ENCODE measurements at regions of chr16 and their contacts with region 1.

Region 1: DNA sequence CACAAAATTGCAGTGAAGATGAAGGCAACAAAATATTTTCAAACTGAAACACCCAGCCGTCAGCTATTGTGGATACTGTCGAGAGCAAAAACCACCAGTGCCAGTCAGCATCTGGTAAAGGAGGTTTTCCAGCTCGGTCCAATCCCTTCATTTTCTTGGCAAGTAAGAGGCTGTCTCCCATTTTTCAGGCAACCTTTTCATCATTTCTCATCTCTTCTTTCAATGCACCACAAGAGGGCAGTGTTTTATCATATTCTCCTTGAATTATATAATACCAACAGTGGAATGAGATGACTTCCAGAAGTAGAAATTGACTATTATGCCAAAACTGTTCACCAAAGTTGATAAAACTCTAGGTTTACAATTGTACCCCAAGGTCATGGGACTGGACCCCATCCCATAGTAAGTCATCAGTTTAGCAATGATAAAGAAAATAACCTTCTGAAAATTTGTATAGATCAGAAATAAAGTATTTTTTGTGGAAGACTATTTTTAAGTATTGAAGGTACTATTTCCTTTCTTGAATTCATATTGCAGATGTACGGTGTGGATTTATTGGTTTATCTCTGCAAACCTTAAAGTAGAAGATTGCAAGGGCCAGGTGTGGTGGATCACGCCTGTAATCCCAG is 16.8 kb downstream of the NQO1 start:
- DNase-seq: peak; percentile 71
- ATAC-seq: peak; percentile 36
- H3K4me3 ChIP-seq: no peak overlapping the region
- H3K4me3 Mint-ChIP-seq: no peak overlapping the region
- H3K27ac ChIP-seq: no peak overlapping the region
- H3K27ac Mint-ChIP-seq: no peak overlapping the region
- H3K4me1 ChIP-seq: no peaks in the 10 kb centered on the region
- H3K4me1 Mint-ChIP-seq: no peaks in the 10 kb centered on the region
- H3K27me3 ChIP-seq: no peaks in the 10 kb centered on the region
- H3K27me3 Mint-ChIP-seq: no peaks in the 10 kb centered on the region
- CTCF ChIP-seq: peak; percentile 85

Region 2: DNA sequence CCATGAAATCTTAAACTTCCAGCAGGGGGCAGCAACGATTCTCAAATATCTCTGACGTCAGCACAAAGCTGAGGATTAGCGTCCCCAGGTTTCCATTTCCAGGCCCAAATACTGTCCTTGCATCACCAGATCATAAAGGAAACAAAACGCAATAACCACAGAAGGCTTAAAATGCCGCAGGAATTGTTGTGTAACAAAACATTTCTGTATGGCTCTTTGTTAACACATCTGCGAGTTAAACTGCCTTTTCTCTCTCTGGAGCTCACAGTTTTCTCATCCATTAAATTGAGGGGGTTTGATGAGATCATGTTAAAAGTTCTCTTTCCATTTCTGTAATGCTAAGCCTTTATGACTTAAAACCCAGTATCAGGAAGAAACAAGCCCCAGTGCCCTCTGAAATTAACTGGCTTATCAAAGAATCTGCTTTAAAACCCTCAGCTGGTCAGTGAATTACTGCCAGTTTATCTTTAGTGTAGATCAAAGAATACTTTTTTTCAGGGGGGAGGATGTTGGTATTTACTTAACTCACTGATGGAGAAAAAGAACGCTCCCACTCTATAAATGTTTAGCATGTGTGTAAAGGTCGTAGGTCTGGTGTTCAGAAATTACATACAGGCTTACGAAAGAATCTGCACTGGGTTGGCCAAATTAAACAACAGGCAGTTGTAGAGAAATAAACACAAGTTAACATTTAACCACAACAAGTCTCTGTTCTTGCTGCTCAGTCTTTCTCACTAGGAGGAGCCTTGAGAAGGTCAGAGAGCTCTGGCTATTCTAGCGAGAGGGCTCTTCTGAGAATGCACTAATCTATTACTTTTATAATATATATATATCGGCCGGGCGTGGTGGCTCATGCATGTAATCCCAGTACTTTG is 313.1 kb before region 1 on chr16:
- CTCF ChIA-PET with region 1: interaction called, 19 read pairs
- POLR2A ChIA-PET with region 1: no interaction called
- intact Hi-C with region 1: loop called (anchors 10 kb)
- DNase-seq: peak; percentile 83
- ATAC-seq: peak; percentile 73
- H3K4me3 ChIP-seq: no peak overlapping the region
- H3K4me3 Mint-ChIP-seq: no peak overlapping the region
- H3K27ac ChIP-seq: peak overlapping the region in 1 of 2 donors; percentile 4
- H3K27ac Mint-ChIP-seq: no peak overlapping the region
- H3K4me1 ChIP-seq: no peaks in the 10 kb centered on the region
- H3K4me1 Mint-ChIP-seq: peaks cover 3% of the 10 kb centered on the region
- H3K27me3 ChIP-seq: no peaks in the 10 kb centered on the region
- H3K27me3 Mint-ChIP-seq: no peaks in the 10 kb centered on the region
- CTCF ChIP-seq: peak; percentile 82

Region 3: GRCh38 chr16:69654307-69654931 is 55.2 kb before region 1 on chr16:
- CTCF ChIA-PET with region 1: no interaction called
- POLR2A ChIA-PET with region 1: no interaction called
- intact Hi-C with region 1: no loop called
- DNase-seq: no peak
- ATAC-seq: no peak
- H3K4me3 ChIP-seq: no peak overlapping the region
- H3K4me3 Mint-ChIP-seq: no peak overlapping the region
- H3K27ac ChIP-seq: no peak overlapping the region
- H3K27ac Mint-ChIP-seq: no peak overlapping the region
- H3K4me1 ChIP-seq: no peaks in the 10 kb centered on the region
- H3K4me1 Mint-ChIP-seq: no peaks in the 10 kb centered on the region
- H3K27me3 ChIP-seq: no peaks in the 10 kb centered on the region
- H3K27me3 Mint-ChIP-seq: no peaks in the 10 kb centered on the region
- CTCF ChIP-seq: no peak

Region 4: GRCh38 chr16:69726296-69727060 is 16.9 kb after region 1 on chr16 and contains the start of gene NQO1:
- CTCF ChIA-PET with region 1: interaction called, 9 read pairs
- POLR2A ChIA-PET with region 1: no interaction called
- intact Hi-C with region 1: loop called (anchors 1 kb)
- DNase-seq: peak; percentile 86
- ATAC-seq: peak; percentile 99
- H3K4me3 ChIP-seq: peak within 1 kb of the TSS; percentile 59 to 68 (median 60)
- H3K4me3 Mint-ChIP-seq: peak within 1 kb of the TSS; percentile 99
- H3K27ac ChIP-seq: peak within 1 kb of the TSS; percentile 47 to 66
- H3K27ac Mint-ChIP-seq: peak within 1 kb of the TSS; percentile 96
- H3K4me1 ChIP-seq: peaks cover 11 to 15% of the 10 kb centered on the region in 2 donors
- H3K4me1 Mint-ChIP-seq: peaks cover 17% of the 10 kb centered on the region
- H3K27me3 ChIP-seq: no peaks in the 10 kb centered on the region
- H3K27me3 Mint-ChIP-seq: no peaks in the 10 kb centered on the region
- CTCF ChIP-seq: no peak
- total RNA-seq, gene NQO1: 1.1 and 2.3 TPM in 2 replicates

Region 5: GRCh38 chr16:69754469-69755310 is 45.1 kb after region 1 on chr16 and contains the start of gene NOB1:
- CTCF ChIA-PET with region 1: interaction called, 73 read pairs
- POLR2A ChIA-PET with region 1: interaction called, 8 read pairs
- intact Hi-C with region 1: no loop called
- DNase-seq: peak; percentile 99
- ATAC-seq: peak; percentile 96
- H3K4me3 ChIP-seq: peak within 1 kb of the TSS; percentile 73 to 100 (median 91)
- H3K4me3 Mint-ChIP-seq: peak within 1 kb of the TSS; percentile 99
- H3K27ac ChIP-seq: peak within 1 kb of the TSS; percentile 61 to 76
- H3K27ac Mint-ChIP-seq: peak within 1 kb of the TSS; percentile 94
- H3K4me1 ChIP-seq: peaks cover 8 to 20% of the 10 kb centered on the region in 2 donors
- H3K4me1 Mint-ChIP-seq: peaks cover 21% of the 10 kb centered on the region
- H3K27me3 ChIP-seq: no peaks in the 10 kb centered on the region
- H3K27me3 Mint-ChIP-seq: no peaks in the 10 kb centered on the region
- CTCF ChIP-seq: peak; percentile 92
- total RNA-seq, gene NOB1: 44.9 and 49.6 TPM in 2 replicates

Region 6: GRCh38 chr16:69859105-69859989 is 149.8 kb after region 1 on chr16:
- CTCF ChIA-PET with region 1: no interaction called
- POLR2A ChIA-PET with region 1: no interaction called
- intact Hi-C with region 1: loop called (anchors 10 kb)
- DNase-seq: peak; percentile 16
- ATAC-seq: no peak
- H3K4me3 ChIP-seq: no peak overlapping the region
- H3K4me3 Mint-ChIP-seq: no peak overlapping the region
- H3K27ac ChIP-seq: no peak overlapping the region
- H3K27ac Mint-ChIP-seq: no peak overlapping the region
- H3K4me1 ChIP-seq: no peaks in the 10 kb centered on the region
- H3K4me1 Mint-ChIP-seq: no peaks in the 10 kb centered on the region
- H3K27me3 ChIP-seq: no peaks in the 10 kb centered on the region
- H3K27me3 Mint-ChIP-seq: no peaks in the 10 kb centered on the region
- CTCF ChIP-seq: no peak

Region 7: GRCh38 chr16:69930117-69930776 is 220.7 kb after region 1 on chr16:
- CTCF ChIA-PET with region 1: interaction called, 26 read pairs
- POLR2A ChIA-PET with region 1: no interaction called
- intact Hi-C with region 1: no loop called
- DNase-seq: peak; percentile 69
- ATAC-seq: peak; percentile 72
- H3K4me3 ChIP-seq: no peak overlapping the region
- H3K4me3 Mint-ChIP-seq: no peak overlapping the region
- H3K27ac ChIP-seq: no peak overlapping the region
- H3K27ac Mint-ChIP-seq: no peak overlapping the region
- H3K4me1 ChIP-seq: no peaks in the 10 kb centered on the region
- H3K4me1 Mint-ChIP-seq: no peaks in the 10 kb centered on the region
- H3K27me3 ChIP-seq: no peaks in the 10 kb centered on the region
- H3K27me3 Mint-ChIP-seq: no peaks in the 10 kb centered on the region
- CTCF ChIP-seq: peak; percentile 82